ENCODE measurements at regions of chr9 and their contacts with region 1.

Region 1: DNA sequence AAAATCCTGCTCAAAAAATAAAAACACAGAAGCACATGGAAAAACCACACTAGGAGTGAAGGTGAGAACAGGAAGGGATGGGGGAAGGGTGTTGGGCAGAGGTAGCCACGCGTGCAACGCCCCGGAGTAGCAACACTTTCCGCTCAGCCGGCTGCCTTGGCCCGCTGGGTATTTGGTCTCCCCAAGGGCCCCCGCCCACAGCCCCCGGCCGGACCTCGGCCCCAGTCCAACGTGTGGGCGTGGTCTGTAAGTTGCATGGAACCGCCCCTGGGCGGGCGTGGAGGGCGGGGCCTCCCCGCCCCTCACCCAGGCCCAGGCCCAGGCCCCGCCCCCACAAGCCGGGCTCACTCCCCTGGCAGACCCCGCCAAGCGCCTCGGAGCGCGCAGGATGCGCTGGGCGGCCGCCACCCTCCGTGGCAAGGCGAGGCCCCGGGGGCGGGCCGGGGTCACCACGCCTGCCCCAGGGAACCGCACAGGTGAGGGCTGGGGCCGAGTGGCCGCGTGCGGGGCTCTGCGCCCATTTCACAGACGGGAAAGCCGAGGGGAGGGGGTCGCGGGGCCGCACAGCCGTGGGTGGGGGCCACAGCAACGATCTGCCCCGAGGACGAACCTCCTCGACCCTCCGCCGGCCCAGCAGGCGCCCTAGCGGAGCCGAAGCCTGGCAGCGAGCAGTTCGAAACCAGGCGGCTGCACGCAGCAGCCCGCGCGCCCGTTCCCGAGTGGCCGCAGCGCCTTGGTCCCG is at the start of gene SUSD3:
- DNase-seq: peak in 8 of 9 experiments; percentile 52 to 84 (median 69)
- ATAC-seq: peak; percentile 63
- H3K4me3 ChIP-seq: peak within 1 kb of the TSS; percentile 60 to 91
- H3K4me3 Mint-ChIP-seq: peak within 1 kb of the TSS; percentile 91
- H3K27ac ChIP-seq: peak within 1 kb of the TSS; percentile 63 to 83
- H3K27ac Mint-ChIP-seq: peak within 1 kb of the TSS; percentile 100
- H3K4me1 ChIP-seq: peaks cover 81% of the 10 kb centered on the region
- H3K4me1 Mint-ChIP-seq: peaks cover 80% of the 10 kb centered on the region
- H3K27me3 ChIP-seq: no peaks in the 10 kb centered on the region
- H3K27me3 Mint-ChIP-seq: no peaks in the 10 kb centered on the region
- CTCF ChIP-seq: no peak
- total RNA-seq, gene SUSD3: 20.6 to 22.7 TPM

Region 2: GRCh38 chr9:92970467-92970923 is 88.0 kb before region 1 on chr9:
- CTCF ChIA-PET with region 1: no interaction called
- POLR2A ChIA-PET with region 1: interaction called, 8 read pairs
- intact Hi-C with region 1: loop called in 1 of 2 experiments (anchors 1 kb)
- DNase-seq: peak in 3 of 9 experiments; percentile 12 to 50 (median 39)
- ATAC-seq: no peak
- H3K4me3 ChIP-seq: peak overlapping the region in 1 of 2 experiments; percentile 59
- H3K4me3 Mint-ChIP-seq: peak overlapping the region; percentile 91
- H3K27ac ChIP-seq: peak overlapping the region; percentile 91 to 94
- H3K27ac Mint-ChIP-seq: peak overlapping the region; percentile 100
- H3K4me1 ChIP-seq: peaks cover 78% of the 10 kb centered on the region
- H3K4me1 Mint-ChIP-seq: peaks cover 80% of the 10 kb centered on the region
- H3K27me3 ChIP-seq: no peaks in the 10 kb centered on the region
- H3K27me3 Mint-ChIP-seq: no peaks in the 10 kb centered on the region
- CTCF ChIP-seq: no peak

Region 3: DNA sequence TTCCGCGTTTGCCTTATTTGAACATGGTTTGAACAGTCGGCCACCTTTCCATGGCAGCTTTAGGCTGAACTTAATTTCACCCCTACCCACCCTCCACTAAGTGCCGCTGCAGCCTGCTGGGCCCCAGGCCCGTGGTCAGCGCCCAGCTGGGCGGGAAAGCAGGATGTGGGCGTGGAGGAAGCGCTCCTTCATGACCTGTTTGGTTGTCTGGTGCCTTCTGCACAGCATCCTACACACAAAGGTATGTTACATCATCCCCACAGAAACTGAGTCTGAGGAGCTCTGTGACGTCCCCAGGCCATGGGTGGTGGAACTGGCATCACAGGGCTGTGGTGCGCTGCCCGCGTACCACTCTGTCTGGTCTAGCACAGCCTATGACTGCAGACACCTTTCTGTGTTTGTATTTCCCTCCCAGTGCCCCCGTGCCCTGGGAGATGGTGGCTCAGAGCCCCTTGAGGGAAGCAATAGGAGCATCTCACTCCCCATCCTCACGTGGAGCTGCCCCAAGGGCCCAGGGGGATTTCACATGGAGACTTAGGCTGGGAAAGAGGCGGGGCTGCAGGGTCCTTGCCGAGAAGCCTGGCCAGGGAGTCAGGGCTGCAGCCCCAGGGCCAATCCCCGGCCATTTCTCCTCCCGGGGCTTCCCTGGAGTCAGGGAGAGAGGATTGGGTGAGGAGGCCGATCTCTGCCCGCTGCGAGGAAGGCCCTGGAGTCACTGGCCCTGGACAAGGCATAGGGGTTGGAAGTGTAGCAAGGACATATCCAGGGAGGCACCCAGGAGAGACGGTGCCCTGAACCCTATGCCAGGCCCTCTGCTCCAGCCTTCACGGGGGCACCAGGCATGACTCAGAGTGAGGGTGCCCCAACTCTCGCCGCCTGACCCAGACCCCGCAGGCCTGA is 37.5 kb before region 1 on chr9:
- CTCF ChIA-PET with region 1: interaction called, 4 read pairs
- POLR2A ChIA-PET with region 1: interaction called, 29 read pairs
- intact Hi-C with region 1: no loop called
- DNase-seq: peak in 4 of 9 experiments; percentile 36 to 91 (median 57)
- ATAC-seq: peak; percentile 91
- H3K4me3 ChIP-seq: no peak overlapping the region
- H3K4me3 Mint-ChIP-seq: no peak overlapping the region
- H3K27ac ChIP-seq: peak overlapping the region; percentile 44 to 75
- H3K27ac Mint-ChIP-seq: peak overlapping the region; percentile 97
- H3K4me1 ChIP-seq: peaks cover 56% of the 10 kb centered on the region
- H3K4me1 Mint-ChIP-seq: peaks cover 66% of the 10 kb centered on the region
- H3K27me3 ChIP-seq: no peaks in the 10 kb centered on the region
- H3K27me3 Mint-ChIP-seq: no peaks in the 10 kb centered on the region
- CTCF ChIP-seq: peak; percentile 25

Region 4: DNA sequence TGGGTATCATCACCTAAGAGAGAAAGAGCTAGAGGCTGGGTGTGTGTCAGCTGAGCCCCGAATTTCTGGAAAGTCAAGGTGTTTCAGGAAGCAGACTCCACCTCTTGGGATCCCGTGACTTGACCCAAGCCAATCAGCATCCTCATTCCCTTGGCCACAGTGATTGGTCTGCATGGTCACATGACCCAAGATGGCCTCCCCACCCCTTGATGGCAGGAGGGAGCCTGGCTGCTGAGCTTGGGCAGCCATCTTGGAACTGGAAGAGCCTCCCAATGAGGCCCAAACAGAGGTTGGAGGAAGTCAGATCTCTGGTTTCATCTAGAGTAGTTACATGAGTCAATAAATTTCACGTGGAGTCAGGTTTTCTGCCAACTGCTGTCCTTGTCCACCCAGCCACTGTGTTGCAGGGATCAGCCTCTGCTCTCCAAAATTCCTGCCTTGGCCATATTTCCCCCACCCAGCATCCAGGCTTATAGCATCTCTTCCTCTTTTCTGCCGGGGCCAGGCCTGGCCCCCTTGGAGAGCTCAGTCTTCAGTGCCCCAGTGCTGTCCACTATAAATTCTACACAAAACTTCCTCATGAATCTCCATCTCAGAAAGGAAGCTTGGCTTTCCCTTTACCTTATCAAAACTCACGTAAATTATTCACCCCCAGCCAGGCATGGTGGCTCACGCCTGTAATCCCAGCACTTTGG is 17.3 kb before region 1 on chr9:
- CTCF ChIA-PET with region 1: interaction called, 11 read pairs
- POLR2A ChIA-PET with region 1: interaction called, 11 read pairs
- intact Hi-C with region 1: loop called in 1 of 2 experiments (anchors 2 kb)
- DNase-seq: peak in 1 of 9 experiments; percentile 50
- ATAC-seq: no peak
- H3K4me3 ChIP-seq: no peak overlapping the region
- H3K4me3 Mint-ChIP-seq: no peak overlapping the region
- H3K27ac ChIP-seq: peak overlapping the region in 1 of 2 experiments; percentile 28
- H3K27ac Mint-ChIP-seq: peak overlapping the region; percentile 79
- H3K4me1 ChIP-seq: peaks cover 53% of the 10 kb centered on the region
- H3K4me1 Mint-ChIP-seq: peaks cover 67% of the 10 kb centered on the region
- H3K27me3 ChIP-seq: no peaks in the 10 kb centered on the region
- H3K27me3 Mint-ChIP-seq: no peaks in the 10 kb centered on the region
- CTCF ChIP-seq: no peak